ENCODE measurements at regions of chr13 and their contacts with region 1.

Region 1: DNA sequence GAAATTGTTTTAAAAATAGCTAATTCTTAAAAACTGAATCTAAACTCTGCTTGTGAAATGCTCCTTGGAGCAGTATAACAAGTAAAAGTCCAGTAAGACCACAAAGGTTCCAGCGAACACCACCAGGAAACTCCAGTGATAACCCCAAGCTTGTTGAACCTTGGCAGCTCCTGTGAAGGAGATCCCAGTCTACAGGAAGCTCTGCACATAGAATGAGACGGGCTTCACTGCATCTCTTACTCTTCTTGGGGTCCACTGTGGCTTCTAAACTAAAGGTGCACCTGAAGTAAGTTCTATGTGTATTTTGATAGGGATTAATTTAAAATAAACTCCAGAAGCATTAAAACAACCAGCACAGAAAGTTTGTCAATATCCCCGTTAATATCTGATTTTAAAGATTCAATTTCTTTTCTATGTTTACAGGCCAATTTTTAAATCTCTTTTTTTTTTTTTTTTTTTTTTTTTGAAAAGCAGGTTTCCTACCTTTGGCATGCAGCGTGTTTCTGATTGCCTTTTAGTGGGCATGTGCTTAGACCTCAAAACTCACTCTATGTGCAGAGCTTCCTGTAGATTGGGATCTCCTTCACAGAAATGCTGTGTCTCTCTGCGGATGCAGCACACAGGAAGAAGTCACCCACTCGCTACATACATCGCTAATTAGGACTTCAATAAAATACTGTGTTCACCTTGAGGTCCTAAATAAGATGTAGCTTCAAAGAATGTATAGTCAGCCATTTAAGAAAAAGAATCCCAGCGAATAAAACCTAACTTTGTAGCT is 508.5 kb downstream of the KLF12 start:
- DNase-seq: peak in 7 of 9 donors; percentile 31 to 80 (median 66)
- ATAC-seq: peak; percentile 90
- H3K4me3 ChIP-seq: no peak overlapping the region
- H3K4me3 Mint-ChIP-seq: peak overlapping the region; percentile 51 to 79 (median 74)
- H3K27ac ChIP-seq: no peak overlapping the region
- H3K27ac Mint-ChIP-seq: peak overlapping the region; percentile 62 to 91 (median 84)
- H3K4me1 ChIP-seq: peaks cover 13 to 32% of the 10 kb centered on the region in 2 donors
- H3K4me1 Mint-ChIP-seq: peaks cover 14 to 63% (median 54%) of the 10 kb centered on the region in 7 donors
- H3K27me3 ChIP-seq: no peaks in the 10 kb centered on the region
- H3K27me3 Mint-ChIP-seq: no peaks in the 10 kb centered on the region

Region 2: GRCh38 chr13:73411067-73411809 is 214.5 kb before region 1 on chr13:
- CTCF ChIA-PET with region 1: no interaction called
- POLR2A ChIA-PET with region 1: no interaction called
- intact Hi-C with region 1: no loop called
- DNase-seq: no peak
- ATAC-seq: no peak
- H3K4me3 ChIP-seq: no peak overlapping the region
- H3K4me3 Mint-ChIP-seq: no peak overlapping the region
- H3K27ac ChIP-seq: no peak overlapping the region
- H3K27ac Mint-ChIP-seq: no peak overlapping the region
- H3K4me1 ChIP-seq: no peaks in the 10 kb centered on the region
- H3K4me1 Mint-ChIP-seq: no peaks in the 10 kb centered on the region
- H3K27me3 ChIP-seq: no peaks in the 10 kb centered on the region
- H3K27me3 Mint-ChIP-seq: no peaks in the 10 kb centered on the region

Region 3: DNA sequence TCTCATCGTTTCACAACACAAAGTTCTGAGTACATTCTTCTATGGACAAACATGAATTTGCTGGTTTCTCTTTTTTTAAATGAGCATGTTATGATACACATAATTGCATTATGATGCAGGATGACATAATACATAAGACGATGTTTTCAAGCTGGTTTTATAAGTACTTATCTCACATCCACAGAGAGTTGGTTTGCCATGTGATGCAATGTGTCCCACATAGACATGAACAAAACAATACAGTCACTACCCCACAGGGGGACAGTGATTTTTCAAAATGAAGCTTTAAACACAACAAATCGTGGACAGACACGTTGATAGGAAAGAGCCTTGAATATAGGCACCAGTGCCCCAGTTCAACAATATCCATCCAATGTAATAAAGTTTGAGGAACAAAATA is 61.3 kb after region 1 on chr13:
- CTCF ChIA-PET with region 1: no interaction called
- POLR2A ChIA-PET with region 1: no interaction called
- intact Hi-C with region 1: loop called in 1 of 2 experiments (anchors 5 kb)
- DNase-seq: no peak
- ATAC-seq: peak; percentile 27
- H3K4me3 ChIP-seq: no peak overlapping the region
- H3K4me3 Mint-ChIP-seq: no peak overlapping the region
- H3K27ac ChIP-seq: no peak overlapping the region
- H3K27ac Mint-ChIP-seq: peak overlapping the region in 1 of 9 donors; percentile 20
- H3K4me1 ChIP-seq: no peaks in the 10 kb centered on the region
- H3K4me1 Mint-ChIP-seq: peaks cover 0 to 16% (median 3%) of the 10 kb centered on the region in 7 donors
- H3K27me3 ChIP-seq: no peaks in the 10 kb centered on the region
- H3K27me3 Mint-ChIP-seq: no peaks in the 10 kb centered on the region

Region 4: DNA sequence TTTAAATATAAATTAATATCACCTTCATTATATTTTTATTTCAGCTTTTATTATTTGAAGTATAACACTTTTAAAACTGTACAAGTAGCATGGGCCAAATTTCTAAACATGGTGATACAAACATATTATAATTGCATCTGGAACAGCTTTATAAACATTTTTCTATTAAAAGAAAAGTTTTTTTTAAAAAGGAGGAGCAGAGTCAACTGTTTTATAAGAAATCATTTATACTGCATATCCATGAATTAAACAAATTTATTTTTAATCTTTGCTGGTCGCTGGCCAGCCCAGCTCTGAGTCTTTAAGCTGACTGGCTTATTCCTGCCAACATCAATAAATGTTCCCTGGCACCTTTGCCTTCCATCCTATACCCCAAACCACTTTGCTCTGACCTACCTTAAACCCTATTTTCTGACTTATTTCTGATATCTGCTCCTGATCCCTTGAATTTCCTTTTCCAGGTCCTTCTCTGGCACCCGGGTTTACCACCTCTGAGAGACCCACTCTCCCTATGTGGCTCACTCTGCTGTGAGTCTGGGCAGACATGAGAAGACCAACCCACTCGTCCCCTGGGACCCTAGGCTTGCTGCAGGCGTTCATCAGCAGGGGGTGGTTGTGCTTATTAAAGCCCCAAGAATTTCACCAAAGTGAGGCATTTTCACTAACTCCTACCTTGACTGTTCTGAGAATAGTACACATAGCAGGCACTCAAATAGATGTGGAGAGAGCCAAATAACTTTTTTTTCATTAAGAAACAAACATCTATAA is 288.2 kb after region 1 on chr13:
- CTCF ChIA-PET with region 1: no interaction called
- POLR2A ChIA-PET with region 1: no interaction called
- intact Hi-C with region 1: no loop called
- DNase-seq: no peak
- ATAC-seq: no peak
- H3K4me3 ChIP-seq: no peak overlapping the region
- H3K4me3 Mint-ChIP-seq: no peak overlapping the region
- H3K27ac ChIP-seq: no peak overlapping the region
- H3K27ac Mint-ChIP-seq: peak overlapping the region in 5 of 9 donors; percentile 16 to 68 (median 48)
- H3K4me1 ChIP-seq: peaks cover 0 to 8% of the 10 kb centered on the region in 2 donors
- H3K4me1 Mint-ChIP-seq: peaks cover 5 to 69% (median 63%) of the 10 kb centered on the region in 7 donors
- H3K27me3 ChIP-seq: no peaks in the 10 kb centered on the region
- H3K27me3 Mint-ChIP-seq: peaks cover 0 to 2% (median 0%) of the 10 kb centered on the region in 5 donors

Measured in naive thymus-derived CD4-positive, alpha-beta T cell (primary cell).